WTC11 (cell line): ENCODE measurements at regions of chr4 and their contacts with region 1.

Region 1: DNA sequence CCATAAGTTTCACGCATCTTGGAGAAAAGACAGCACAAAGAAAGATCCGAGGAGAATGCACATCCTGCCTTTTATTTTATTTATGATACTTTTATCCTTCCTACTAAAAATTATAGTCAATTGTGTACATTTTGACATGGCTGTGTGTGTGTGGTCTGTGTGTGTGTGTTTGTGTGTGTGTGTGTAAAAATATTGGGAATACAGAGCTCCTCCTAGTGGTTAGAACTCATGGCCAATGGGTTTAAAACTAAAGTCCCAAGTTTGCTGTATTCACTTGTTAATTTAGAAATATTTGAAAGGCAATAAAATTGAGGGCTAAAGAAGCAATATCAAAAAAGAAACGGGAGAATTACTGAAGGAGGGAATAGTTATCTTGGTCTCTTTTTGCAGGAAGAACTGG is 47.5 kb downstream of the NKX6-1 start:
- DNase-seq: no peak
- ATAC-seq: 0 out of 2 replicates have a peak, but pooled peaks have one; percentile 34
- H3K4me3 Mint-ChIP-seq: no peak overlapping the region
- H3K27ac Mint-ChIP-seq: no peak overlapping the region
- H3K4me1 Mint-ChIP-seq: peaks cover 14% of the 10 kb centered on the region
- H3K27me3 Mint-ChIP-seq: no peaks in the 10 kb centered on the region
- CTCF ChIP-seq: peak; percentile 18; the same call in 1 of the 2 replicates

Region 2: DNA sequence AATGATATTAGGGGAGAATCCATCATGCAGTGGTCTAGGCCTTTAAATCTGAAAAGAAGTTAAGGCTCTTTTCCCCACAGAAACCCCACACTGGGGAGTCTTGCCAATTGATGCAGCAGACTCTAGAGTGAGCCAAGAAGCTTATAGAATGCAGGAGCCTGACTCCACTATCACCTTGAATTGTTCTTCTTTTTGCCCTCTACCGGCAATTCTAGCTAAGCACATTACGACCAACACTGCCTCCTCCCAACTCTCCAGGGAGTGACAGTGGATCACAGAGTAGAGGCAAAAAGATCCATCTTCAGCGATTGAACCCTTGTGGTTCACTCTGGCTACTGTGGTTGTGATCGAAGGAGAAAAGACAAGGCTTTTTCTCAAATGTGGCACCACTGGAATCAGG is 284.0 kb before region 1 on chr4:
- CTCF ChIA-PET with region 1: interaction called, 10 read pairs
- POLR2A ChIA-PET with region 1: no interaction called
- DNase-seq: peak; percentile 22
- ATAC-seq: peak; percentile 99
- H3K4me3 Mint-ChIP-seq: no peak overlapping the region
- H3K27ac Mint-ChIP-seq: no peak overlapping the region
- H3K4me1 Mint-ChIP-seq: peaks cover 6% of the 10 kb centered on the region
- H3K27me3 Mint-ChIP-seq: no peaks in the 10 kb centered on the region
- CTCF ChIP-seq: no peak

Region 3: GRCh38 chr4:84238247-84239090 is 213.1 kb before region 1 on chr4:
- CTCF ChIA-PET with region 1: interaction called, 11 read pairs
- POLR2A ChIA-PET with region 1: no interaction called
- DNase-seq: no peak
- ATAC-seq: peak; percentile 36; the same call in 1 of the 2 replicates
- H3K4me3 Mint-ChIP-seq: no peak overlapping the region
- H3K27ac Mint-ChIP-seq: no peak overlapping the region
- H3K4me1 Mint-ChIP-seq: peaks cover 8% of the 10 kb centered on the region
- H3K27me3 Mint-ChIP-seq: no peaks in the 10 kb centered on the region
- CTCF ChIP-seq: no peak

Region 4: DNA sequence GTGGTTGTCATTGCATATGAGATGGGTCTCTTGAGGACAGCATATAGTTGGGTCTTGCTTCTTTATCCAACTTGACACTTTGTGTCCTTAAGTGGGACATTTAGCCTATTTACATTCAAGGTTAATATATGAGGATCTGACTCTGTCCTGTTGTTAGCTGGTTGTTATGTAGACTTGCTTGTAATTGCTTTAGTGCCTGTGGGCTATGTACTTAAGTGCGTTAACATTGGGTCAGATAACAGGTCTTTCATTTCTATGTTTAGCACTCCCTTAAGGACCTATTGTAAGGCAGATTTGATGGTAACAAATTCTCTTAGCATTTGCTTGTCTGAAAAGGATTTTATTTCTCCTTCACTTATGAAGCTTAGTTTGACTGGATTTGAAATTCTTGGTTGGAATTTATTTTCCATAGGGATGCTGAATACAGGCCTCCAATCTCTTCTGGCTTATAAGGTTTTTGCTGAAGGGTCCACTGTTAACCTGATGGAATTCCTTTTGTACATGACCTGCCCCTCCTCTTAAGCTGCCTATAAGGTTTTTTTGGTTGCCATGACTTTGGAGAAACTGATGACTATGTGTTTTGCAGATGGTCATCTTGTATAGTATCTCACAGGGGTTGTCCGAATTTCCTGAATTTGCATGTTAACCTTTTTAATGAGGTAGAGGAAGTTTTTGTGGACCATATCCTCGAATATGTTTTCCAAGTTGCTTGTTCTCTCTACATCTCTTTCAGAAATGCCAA is 114.4 kb before region 1 on chr4:
- CTCF ChIA-PET with region 1: no interaction called
- POLR2A ChIA-PET with region 1: no interaction called
- DNase-seq: no peak
- ATAC-seq: peak; percentile 95
- H3K4me3 Mint-ChIP-seq: no peak overlapping the region
- H3K27ac Mint-ChIP-seq: no peak overlapping the region
- H3K4me1 Mint-ChIP-seq: peaks cover 32% of the 10 kb centered on the region
- H3K27me3 Mint-ChIP-seq: peaks cover 73% of the 10 kb centered on the region
- CTCF ChIP-seq: no peak

Region 5: GRCh38 chr4:84436812-84437211 is 14.7 kb before region 1 on chr4:
- CTCF ChIA-PET with region 1: interaction called, 25 read pairs
- POLR2A ChIA-PET with region 1: no interaction called
- DNase-seq: no peak
- ATAC-seq: no peak
- H3K4me3 Mint-ChIP-seq: no peak overlapping the region
- H3K27ac Mint-ChIP-seq: no peak overlapping the region
- H3K4me1 Mint-ChIP-seq: peaks cover 12% of the 10 kb centered on the region
- H3K27me3 Mint-ChIP-seq: no peaks in the 10 kb centered on the region; the same call in 1 of the 2 replicates
- CTCF ChIP-seq: no peak

Region 6: DNA sequence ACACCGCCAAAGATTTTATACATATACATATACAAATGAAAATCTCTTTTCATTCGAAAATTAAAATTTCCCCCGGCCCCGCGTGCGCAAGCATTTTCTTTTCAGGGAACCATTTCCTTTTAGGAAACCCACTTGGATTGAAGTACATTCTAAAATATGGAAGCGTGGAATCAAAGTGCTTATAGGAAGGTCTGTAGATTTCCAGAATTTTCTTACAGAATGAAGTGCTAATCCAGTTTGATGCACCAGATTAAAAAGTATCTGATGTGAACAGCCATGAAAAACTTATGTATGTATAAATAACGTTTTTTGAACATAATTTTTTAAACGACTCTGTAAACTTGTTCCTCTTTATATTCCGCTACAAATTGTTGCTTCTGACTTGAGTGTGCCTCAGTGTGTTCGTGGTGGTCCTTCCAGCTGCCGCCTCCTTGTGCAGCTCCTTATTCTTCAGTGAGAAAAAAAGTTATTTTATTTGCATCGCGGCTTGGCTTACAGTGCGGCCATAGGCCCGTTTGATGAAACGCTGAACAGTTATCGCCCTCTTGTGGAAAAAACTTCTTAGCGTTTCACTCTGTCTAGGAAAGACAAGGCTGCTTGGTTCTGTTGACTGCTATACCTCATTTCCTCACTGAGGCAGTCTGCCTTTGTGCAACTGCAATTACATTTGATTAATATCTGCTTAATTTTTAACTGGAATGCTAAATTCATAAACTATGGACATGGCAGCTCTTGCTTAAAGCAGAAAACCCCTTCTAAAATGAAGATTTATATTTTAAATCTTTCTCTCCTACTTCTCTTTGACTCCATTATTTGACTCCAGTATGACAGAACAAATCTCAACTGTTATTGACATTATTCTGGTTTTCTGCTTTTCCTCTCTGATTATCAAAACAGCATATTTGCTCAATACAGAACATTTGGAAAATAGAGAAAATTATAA is 52.2 kb after region 1 on chr4:
- CTCF ChIA-PET with region 1: interaction called, 17 read pairs
- POLR2A ChIA-PET with region 1: no interaction called
- DNase-seq: peak; percentile 33
- ATAC-seq: peak; percentile 15
- H3K4me3 Mint-ChIP-seq: peak overlapping the region; percentile 51
- H3K27ac Mint-ChIP-seq: no peak overlapping the region
- H3K4me1 Mint-ChIP-seq: peaks cover 46% of the 10 kb centered on the region
- H3K27me3 Mint-ChIP-seq: peaks cover 68% of the 10 kb centered on the region
- CTCF ChIP-seq: peak; percentile 22